ENCODE measurements at regions of chr4 and their contacts with region 1.

Region 1: GRCh38 chr4:87235020-87235671 is 14.7 kb upstream of the KLHL8 start:
- DNase-seq: no peak
- H3K4me3 ChIP-seq: peak overlapping the region; percentile 39
- H3K27ac ChIP-seq: no peak overlapping the region
- H3K4me1 ChIP-seq: no peaks in the 10 kb centered on the region
- H3K27me3 ChIP-seq: no peaks in the 10 kb centered on the region
- CTCF ChIP-seq: no peak
- EP300 ChIP-seq: no peak
- POLR2A ChIP-seq: no peak

Region 2: GRCh38 chr4:86508436-86508835 is 726.7 kb before region 1 on chr4:
- intact Hi-C with region 1: loop called in 1 of 4 experiments (anchors 10 kb)
- DNase-seq: no peak
- H3K4me3 ChIP-seq: no peak overlapping the region
- H3K27ac ChIP-seq: peak overlapping the region in 1 of 2 donors; percentile 22
- H3K4me1 ChIP-seq: no peaks in the 10 kb centered on the region
- H3K27me3 ChIP-seq: no peaks in the 10 kb centered on the region
- CTCF ChIP-seq: no peak
- EP300 ChIP-seq: no peak
- POLR2A ChIP-seq: no peak

Region 3: GRCh38 chr4:86927843-86928395 is 307.2 kb before region 1 on chr4:
- intact Hi-C with region 1: loop called in 3 of 4 experiments (anchors 5 to 10 kb)
- DNase-seq: peak in 2 of 5 donors; percentile 35 to 77
- H3K4me3 ChIP-seq: no peak overlapping the region
- H3K27ac ChIP-seq: no peak overlapping the region
- H3K4me1 ChIP-seq: no peaks in the 10 kb centered on the region
- H3K27me3 ChIP-seq: no peaks in the 10 kb centered on the region
- CTCF ChIP-seq: no peak
- EP300 ChIP-seq: peak; percentile 84
- POLR2A ChIP-seq: no peak

Region 4: GRCh38 chr4:87120411-87121199 is 114.5 kb before region 1 on chr4:
- intact Hi-C with region 1: no loop called
- DNase-seq: peak; percentile 49 to 81 (median 58)
- H3K4me3 ChIP-seq: peak overlapping the region; percentile 6
- H3K27ac ChIP-seq: peak overlapping the region in 1 of 2 donors; percentile 12
- H3K4me1 ChIP-seq: peaks cover 7% of the 10 kb centered on the region
- H3K27me3 ChIP-seq: no peaks in the 10 kb centered on the region
- CTCF ChIP-seq: peak in 1 of 3 donors; percentile 9
- EP300 ChIP-seq: no peak
- POLR2A ChIP-seq: no peak

Region 5: DNA sequence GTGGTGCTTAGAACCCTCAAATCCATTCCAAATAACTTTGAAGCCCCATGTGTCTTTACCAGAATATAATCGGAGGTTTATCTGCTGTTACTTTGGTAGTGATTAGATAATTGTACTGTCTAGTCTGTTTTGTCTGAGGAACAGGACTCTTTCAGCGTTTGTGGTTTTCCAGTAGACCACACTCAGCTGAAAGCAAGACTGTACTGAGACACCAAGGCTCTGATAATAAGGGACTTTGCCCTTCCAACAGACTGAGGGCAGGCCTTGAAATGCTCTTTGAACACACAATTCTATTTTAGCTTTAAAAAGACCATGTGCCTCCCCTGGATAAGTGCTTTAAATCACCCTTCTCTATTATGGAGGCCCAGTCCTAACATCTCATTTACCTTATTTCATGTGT is 90.8 kb before region 1 on chr4:
- intact Hi-C with region 1: loop called in 2 of 4 experiments (anchors 10 kb)
- DNase-seq: no peak
- H3K4me3 ChIP-seq: no peak overlapping the region
- H3K27ac ChIP-seq: no peak overlapping the region
- H3K4me1 ChIP-seq: no peaks in the 10 kb centered on the region
- H3K27me3 ChIP-seq: no peaks in the 10 kb centered on the region
- CTCF ChIP-seq: no peak
- EP300 ChIP-seq: no peak
- POLR2A ChIP-seq: no peak

Region 6: DNA sequence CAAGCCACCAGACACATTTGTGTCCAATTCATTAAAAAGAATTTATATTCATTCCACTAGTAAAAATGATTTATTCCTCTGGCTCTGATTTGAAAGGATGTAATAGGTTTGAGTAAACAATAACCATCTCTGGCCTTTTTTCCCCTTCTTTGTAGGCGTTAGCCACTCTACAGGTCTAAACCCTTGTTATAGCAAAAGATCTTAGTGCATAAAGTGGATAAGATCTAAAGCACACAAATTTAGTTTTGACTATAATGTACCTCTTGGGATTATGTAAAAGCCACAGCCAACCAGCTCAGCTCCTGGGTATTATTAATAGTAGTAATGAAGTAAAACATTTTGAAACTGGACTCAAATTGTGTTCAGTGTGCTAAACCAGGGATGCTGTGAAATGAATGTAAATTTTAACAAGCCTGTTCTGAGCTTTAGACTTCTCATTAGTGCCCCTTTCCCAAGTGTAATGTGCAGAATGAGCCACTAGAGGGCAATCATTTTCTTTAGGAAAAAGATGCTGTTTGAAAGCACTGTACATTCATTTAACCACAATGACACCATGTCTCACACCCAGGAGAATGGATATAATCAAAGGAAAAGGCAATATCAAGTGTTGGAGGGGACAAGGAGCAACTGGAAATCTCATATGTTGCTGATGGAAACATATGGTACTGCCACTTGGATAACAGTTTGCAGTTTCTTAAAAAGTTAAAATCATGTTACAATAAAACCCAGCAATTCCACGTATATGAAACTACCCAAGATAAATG is 84.5 kb before region 1 on chr4:
- intact Hi-C with region 1: loop called (anchors 5 to 10 kb)
- DNase-seq: peak in 2 of 5 donors; percentile 12 to 47
- H3K4me3 ChIP-seq: no peak overlapping the region
- H3K27ac ChIP-seq: no peak overlapping the region
- H3K4me1 ChIP-seq: no peaks in the 10 kb centered on the region
- H3K27me3 ChIP-seq: no peaks in the 10 kb centered on the region
- CTCF ChIP-seq: peak; percentile 31 to 82 (median 79)
- EP300 ChIP-seq: no peak
- POLR2A ChIP-seq: no peak

Measured in ovary (tissue), 10 donors.